ENCODE measurements at regions of chr16 and their contacts with region 1.

Region 1: DNA sequence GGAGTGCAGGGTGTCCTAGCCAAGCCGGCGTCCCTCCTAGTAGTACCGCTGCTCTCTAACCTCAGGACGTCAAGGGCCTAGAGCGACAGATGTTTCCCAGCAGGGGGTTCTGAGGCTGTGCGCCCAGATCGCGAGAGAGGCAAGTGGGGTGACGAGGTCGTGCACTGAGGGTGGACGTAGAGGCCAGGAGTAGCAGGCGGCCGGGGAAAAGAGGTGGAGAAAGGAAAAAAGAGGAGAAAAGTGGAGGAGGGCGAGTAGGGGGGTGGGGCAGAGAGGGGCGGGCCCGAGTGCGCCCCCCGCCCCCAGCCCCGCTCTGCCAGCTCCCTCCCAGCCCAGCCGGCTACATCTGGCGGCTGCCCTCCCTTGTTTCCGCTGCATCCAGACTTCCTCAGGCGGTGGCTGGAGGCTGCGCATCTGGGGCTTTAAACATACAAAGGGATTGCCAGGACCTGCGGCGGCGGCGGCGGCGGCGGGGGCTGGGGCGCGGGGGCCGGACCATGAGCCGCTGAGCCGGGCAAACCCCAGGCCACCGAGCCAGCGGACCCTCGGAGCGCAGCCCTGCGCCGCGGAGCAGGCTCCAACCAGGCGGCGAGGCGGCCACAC is at the start of gene MMP2:
- DNase-seq: no peak
- H3K4me3 ChIP-seq: peak within 1 kb of the TSS; percentile 55 to 90 (median 77)
- H3K27ac ChIP-seq: peak within 1 kb of the TSS; percentile 86 to 98
- H3K4me1 ChIP-seq: peaks cover 0 to 8% of the 10 kb centered on the region in 2 donors
- H3K27me3 ChIP-seq: peaks cover 0 to 4% of the 10 kb centered on the region in 2 donors
- CTCF ChIP-seq: no peak
- POLR2A ChIP-seq: no peak
- total RNA-seq, gene MMP2: 113 to 1,485 (median 459) TPM

Region 2: DNA sequence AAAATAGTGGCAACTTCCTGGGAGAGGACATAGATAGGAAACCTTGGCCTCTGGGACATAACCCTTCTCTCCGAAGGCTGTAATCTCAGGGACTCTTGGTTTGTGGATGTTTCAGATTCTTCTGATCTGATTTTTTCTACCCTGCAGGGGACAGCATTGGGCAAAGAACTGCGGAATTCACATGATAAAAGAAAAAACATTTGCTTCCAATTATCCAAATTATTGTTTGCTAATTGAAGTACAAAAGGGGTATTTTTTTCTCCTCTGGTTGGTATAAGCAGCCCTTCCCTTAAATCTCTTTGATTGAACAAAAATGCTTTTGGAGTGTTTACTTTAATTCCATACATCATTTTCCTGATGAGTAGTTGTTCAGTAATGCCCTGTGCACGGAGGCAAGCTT is 940.7 kb before region 1 on chr16:
- intact Hi-C with region 1: loop called (anchors 5 kb)
- DNase-seq: no peak
- H3K4me3 ChIP-seq: no peak overlapping the region
- H3K27ac ChIP-seq: no peak overlapping the region
- H3K4me1 ChIP-seq: no peaks in the 10 kb centered on the region
- H3K27me3 ChIP-seq: no peaks in the 10 kb centered on the region
- CTCF ChIP-seq: no peak
- POLR2A ChIP-seq: no peak

Region 3: GRCh38 chr16:55981557-55981956 is 502.6 kb after region 1 on chr16:
- intact Hi-C with region 1: loop called (anchors 5 kb)
- DNase-seq: no peak
- H3K4me3 ChIP-seq: no peak overlapping the region
- H3K27ac ChIP-seq: no peak overlapping the region
- H3K4me1 ChIP-seq: no peaks in the 10 kb centered on the region
- H3K27me3 ChIP-seq: no peaks in the 10 kb centered on the region
- CTCF ChIP-seq: no peak
- POLR2A ChIP-seq: no peak